Activated naive CD4-positive, alpha-beta T cell treated with anti-CD3 and anti-CD28 coated beads for 36 hours (primary cell): ENCODE measurements at regions of chr7 and their contacts with region 1.

Region 1: GRCh38 chr7:136009488-136010079 is 32.4 kb upstream of the MTPN start:
- DNase-seq: no peak
- H3K4me3 Mint-ChIP-seq: no peak overlapping the region
- H3K27ac Mint-ChIP-seq: no peak overlapping the region
- H3K4me1 Mint-ChIP-seq: peaks cover 4% of the 10 kb centered on the region
- H3K27me3 Mint-ChIP-seq: peaks cover 10% of the 10 kb centered on the region

Region 2: DNA sequence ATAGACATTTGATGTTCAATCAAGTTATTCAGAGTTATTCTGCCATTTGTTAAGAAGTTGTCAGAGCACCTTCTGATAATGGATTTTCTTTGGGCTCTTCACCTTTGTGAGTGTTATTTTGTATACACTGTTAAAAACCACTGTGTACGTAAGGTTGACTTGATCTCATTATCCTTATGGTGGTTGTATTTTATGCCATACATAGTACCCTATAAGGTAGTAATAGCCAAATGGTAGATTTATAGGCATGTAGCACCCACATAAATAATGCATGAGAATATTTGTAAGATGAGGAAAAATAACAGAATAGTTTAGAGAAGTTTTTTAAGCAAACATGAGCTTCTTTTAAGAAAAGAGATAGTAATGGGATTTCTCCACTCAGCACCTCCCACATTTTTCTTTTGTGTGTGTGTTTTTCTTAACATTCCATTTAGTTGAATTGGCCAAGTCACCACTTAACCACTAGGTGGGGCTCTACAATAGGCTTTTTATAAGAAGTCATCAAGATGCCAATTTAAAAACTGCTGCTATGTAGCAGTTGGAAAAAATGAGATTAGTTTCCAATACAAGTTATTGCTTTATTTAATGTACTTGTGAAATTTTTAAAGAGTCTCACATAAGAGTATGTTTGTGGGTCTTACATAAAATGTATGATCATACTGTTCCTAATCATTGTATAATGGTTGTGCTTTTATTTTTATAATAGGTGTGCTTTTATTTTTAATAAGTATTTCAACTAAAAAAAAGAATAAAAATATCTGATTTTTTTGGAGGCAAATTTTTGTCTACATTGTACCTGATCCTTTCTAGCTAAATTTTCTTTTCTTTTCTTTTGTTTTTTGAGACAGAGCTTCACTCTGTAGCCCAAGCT is 388.4 kb before region 1 on chr7:
- CTCF ChIA-PET with region 1: interaction called, 3 read pairs
- intact Hi-C with region 1: loop called (anchors 1 kb)
- DNase-seq: peak; percentile 45
- H3K4me3 Mint-ChIP-seq: no peak overlapping the region
- H3K27ac Mint-ChIP-seq: no peak overlapping the region
- H3K4me1 Mint-ChIP-seq: no peaks in the 10 kb centered on the region
- H3K27me3 Mint-ChIP-seq: no peaks in the 10 kb centered on the region

Region 3: GRCh38 chr7:135993950-135994349 is 15.6 kb before region 1 on chr7:
- CTCF ChIA-PET with region 1: interaction called, 22 read pairs
- intact Hi-C with region 1: no loop called
- DNase-seq: no peak
- H3K4me3 Mint-ChIP-seq: no peak overlapping the region
- H3K27ac Mint-ChIP-seq: no peak overlapping the region
- H3K4me1 Mint-ChIP-seq: peaks cover 17% of the 10 kb centered on the region
- H3K27me3 Mint-ChIP-seq: peaks cover 5% of the 10 kb centered on the region

Region 4: DNA sequence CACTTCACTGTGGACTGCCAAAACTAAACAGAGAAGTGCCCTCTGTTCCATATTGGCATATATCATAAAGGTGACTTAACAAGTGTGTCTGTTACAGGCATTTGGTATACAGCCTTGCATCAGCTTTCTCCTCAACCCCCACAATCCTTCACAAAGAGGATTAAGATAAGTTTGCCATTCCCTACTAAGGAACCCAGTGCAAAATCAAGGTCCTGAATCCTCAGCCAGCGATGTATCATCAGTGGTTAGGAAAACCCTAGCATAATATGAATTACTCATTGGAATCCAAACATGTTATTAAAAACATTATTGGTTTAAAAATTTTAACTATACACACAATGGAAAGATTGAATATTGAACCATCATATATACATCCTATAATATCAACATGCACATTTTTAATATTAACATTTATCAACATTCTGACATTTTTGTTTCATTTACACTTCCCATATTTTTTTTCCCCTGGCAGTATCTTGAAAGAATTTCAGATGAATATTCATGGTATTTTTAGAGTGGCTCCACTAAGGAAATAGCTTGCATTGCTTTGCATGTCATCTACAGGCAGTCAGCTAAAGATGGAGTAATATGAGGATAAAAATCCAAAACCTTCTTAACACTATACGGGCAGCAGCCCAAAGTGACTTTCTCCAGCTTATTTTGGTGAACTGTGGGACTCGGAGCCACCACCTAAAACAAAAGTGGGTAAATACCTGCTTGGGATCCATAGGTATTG is 643.2 kb after region 1 on chr7:
- CTCF ChIA-PET with region 1: no interaction called
- intact Hi-C with region 1: no loop called
- DNase-seq: no peak
- H3K4me3 Mint-ChIP-seq: no peak overlapping the region
- H3K27ac Mint-ChIP-seq: no peak overlapping the region
- H3K4me1 Mint-ChIP-seq: no peaks in the 10 kb centered on the region
- H3K27me3 Mint-ChIP-seq: no peaks in the 10 kb centered on the region